Activated naive CD4-positive, alpha-beta T cell treated with anti-CD3 and anti-CD28 coated beads, Interleukin-2, amount 10 ng/mL, durations not matched to agents 7 days and 5 days (primary cell): ENCODE measurements at regions of chr18 and their contacts with region 1.

Region 1: GRCh38 chr18:35029770-35030169 is 11.4 kb upstream of the MAPRE2 start:
- DNase-seq: no peak
- H3K4me3 Mint-ChIP-seq: peak overlapping the region; percentile 65
- H3K27ac Mint-ChIP-seq: peak overlapping the region; percentile 97
- H3K4me1 Mint-ChIP-seq: peaks cover 54% of the 10 kb centered on the region
- H3K27me3 Mint-ChIP-seq: no peaks in the 10 kb centered on the region

Region 2: DNA sequence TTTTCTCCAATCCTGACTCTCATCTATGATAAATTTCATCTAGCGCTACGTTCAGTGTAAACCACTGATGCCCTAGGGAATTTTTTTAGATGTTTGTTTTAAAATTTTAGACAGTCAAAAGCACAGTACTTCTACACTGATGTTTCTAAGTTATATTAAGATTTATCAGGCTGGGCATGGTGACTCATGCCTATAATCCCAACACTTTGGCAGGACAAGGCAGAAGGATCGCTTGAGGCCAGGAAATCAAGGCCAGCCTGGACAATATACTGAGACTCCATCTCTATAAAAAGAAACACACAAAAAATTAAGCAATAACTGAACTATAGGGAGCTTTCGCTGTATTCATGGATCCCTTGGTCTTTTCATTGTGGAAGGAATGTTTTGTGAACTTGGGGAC is 39.2 kb before region 1 on chr18:
- CTCF ChIA-PET with region 1: no interaction called
- DNase-seq: no peak
- H3K4me3 Mint-ChIP-seq: no peak overlapping the region
- H3K27ac Mint-ChIP-seq: no peak overlapping the region
- H3K4me1 Mint-ChIP-seq: no peaks in the 10 kb centered on the region
- H3K27me3 Mint-ChIP-seq: no peaks in the 10 kb centered on the region

Region 3: DNA sequence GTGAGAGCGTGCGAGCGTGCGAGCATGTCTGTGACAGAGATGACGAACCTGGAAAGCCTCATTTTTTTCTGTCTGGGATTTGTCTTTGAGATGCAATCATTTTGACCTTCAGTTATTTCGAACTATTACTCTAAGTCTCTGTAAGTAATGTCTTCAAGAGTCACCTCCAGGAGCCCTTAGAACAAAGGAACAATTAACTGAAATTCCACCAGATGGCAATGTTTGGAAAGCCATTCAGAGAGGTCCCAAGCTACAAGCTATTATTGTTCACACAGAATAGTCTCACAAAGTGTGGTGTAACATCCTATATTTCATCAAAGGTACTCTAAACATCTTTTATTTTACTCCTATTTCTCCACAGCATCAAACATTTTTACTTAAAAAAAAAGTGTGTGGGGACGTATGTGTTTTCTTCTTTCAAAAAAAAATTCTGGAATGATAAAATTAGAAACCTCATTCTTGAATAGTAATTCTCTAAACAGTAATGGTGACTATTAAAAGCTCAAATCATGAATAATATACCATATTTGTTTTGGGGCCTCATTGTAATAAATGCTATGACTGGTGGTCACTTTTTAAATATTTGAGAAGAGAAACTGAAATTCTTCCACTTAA is 23.7 kb before region 1 on chr18:
- CTCF ChIA-PET with region 1: interaction called, 12 read pairs
- DNase-seq: no peak
- H3K4me3 Mint-ChIP-seq: no peak overlapping the region
- H3K27ac Mint-ChIP-seq: no peak overlapping the region
- H3K4me1 Mint-ChIP-seq: no peaks in the 10 kb centered on the region
- H3K27me3 Mint-ChIP-seq: no peaks in the 10 kb centered on the region

Region 4: GRCh38 chr18:35143622-35144596 is 114.1 kb after region 1 on chr18:
- CTCF ChIA-PET with region 1: interaction called, 38 read pairs
- DNase-seq: peak; percentile 54
- H3K4me3 Mint-ChIP-seq: no peak overlapping the region
- H3K27ac Mint-ChIP-seq: no peak overlapping the region
- H3K4me1 Mint-ChIP-seq: no peaks in the 10 kb centered on the region
- H3K27me3 Mint-ChIP-seq: no peaks in the 10 kb centered on the region

Region 5: GRCh38 chr18:35231052-35231451 is 201.3 kb after region 1 on chr18:
- CTCF ChIA-PET with region 1: interaction called, 27 read pairs
- DNase-seq: peak; percentile 86
- H3K4me3 Mint-ChIP-seq: peak overlapping the region; percentile 2
- H3K27ac Mint-ChIP-seq: no peak overlapping the region
- H3K4me1 Mint-ChIP-seq: peaks cover 3% of the 10 kb centered on the region
- H3K27me3 Mint-ChIP-seq: no peaks in the 10 kb centered on the region

Region 6: DNA sequence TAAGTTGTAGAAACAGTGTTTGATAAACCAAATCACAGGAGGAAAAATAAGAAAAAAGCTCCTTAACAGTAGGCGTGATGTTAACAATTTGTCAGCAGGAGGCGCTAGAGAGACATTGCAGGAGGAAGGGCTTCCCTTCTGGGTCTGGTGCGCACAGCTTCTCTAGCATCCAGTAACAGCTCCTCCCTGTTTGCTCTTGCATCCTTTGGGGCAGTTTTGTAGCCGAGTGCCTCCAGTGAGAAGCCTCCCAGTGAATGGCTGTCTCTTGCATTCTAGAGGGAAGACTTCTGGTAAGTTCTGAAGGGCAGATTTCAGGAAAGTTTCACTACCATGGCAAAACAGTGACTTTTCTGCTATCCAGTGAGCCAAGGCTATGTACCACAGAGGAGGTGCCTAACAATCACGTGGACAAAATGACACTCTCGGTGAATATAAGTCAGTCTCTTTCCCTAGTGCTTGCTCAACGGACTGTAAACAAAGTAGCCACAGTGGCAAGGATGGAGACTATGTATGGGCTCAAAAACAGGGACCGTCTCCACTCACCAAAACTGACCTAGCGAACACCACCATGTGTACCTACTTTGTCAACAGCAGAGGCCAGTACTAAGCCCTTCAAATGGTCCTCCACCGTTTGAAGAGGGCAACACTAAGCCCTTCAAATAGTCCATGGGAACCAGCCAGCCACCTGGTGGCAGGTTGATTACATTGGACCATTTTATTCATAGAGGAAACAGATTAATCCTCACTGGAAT is 357.0 kb after region 1 on chr18:
- CTCF ChIA-PET with region 1: interaction called, 11 read pairs
- DNase-seq: peak; percentile 75
- H3K4me3 Mint-ChIP-seq: no peak overlapping the region
- H3K27ac Mint-ChIP-seq: no peak overlapping the region
- H3K4me1 Mint-ChIP-seq: peaks cover 2% of the 10 kb centered on the region
- H3K27me3 Mint-ChIP-seq: peaks cover 33% of the 10 kb centered on the region